ENCODE measurements at regions of chr9 and their contacts with region 1.

Region 1: GRCh38 chr9:5437254-5438216 is at the start of gene PLGRKT:
- DNase-seq: peak; percentile 83 to 84
- H3K4me3 ChIP-seq: peak within 1 kb of the TSS; percentile 80
- H3K27ac ChIP-seq: peak within 1 kb of the TSS; percentile 84
- H3K4me1 ChIP-seq: peaks cover 24% of the 10 kb centered on the region
- H3K27me3 ChIP-seq: no peaks in the 10 kb centered on the region
- CTCF ChIP-seq: no peak; the same call in 1 of the 2 replicates
- total RNA-seq, gene PLGRKT: 13.5 and 22.0 TPM in 2 replicates

Region 2: DNA sequence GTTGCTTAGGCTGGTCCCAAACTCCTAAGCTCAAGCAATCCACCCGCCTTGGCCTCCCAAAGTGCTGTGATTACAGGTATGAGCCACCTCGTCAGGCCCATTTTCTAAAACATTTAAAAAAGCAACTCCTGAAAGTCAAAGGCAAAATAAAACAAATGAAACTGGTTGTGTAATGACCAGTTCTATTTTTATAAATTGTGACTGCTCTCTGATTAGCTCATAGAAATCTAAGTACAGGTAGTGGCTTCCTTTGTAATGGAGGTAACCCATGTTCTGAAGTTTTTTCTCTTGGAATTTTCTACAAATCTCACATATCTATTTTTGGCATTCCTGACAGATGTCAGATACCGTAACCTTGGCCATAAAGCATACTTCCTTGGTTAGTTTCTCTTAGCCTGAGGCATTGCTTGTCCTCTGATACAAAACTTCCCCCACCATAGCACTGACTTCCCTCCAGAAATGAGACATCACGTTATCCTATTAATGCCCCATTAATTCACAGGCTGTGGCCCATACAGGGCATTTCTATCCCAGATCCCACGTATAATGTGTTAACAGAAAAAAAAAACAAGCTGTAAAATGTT is 682.4 kb before region 1 on chr9:
- CTCF ChIA-PET with region 1: no interaction called
- POLR2A ChIA-PET with region 1: no interaction called
- intact Hi-C with region 1: loop called (anchors 5 kb)
- DNase-seq: no peak
- H3K4me3 ChIP-seq: no peak overlapping the region
- H3K27ac ChIP-seq: no peak overlapping the region
- H3K4me1 ChIP-seq: no peaks in the 10 kb centered on the region
- H3K27me3 ChIP-seq: no peaks in the 10 kb centered on the region
- CTCF ChIP-seq: no peak

Region 3: GRCh38 chr9:5186416-5187169 is 250.9 kb before region 1 on chr9:
- CTCF ChIA-PET with region 1: interaction called, 9 read pairs
- POLR2A ChIA-PET with region 1: interaction called, 11 read pairs
- intact Hi-C with region 1: loop called (anchors 1 kb)
- DNase-seq: peak; percentile 44 to 46
- H3K4me3 ChIP-seq: no peak overlapping the region
- H3K27ac ChIP-seq: no peak overlapping the region
- H3K4me1 ChIP-seq: no peaks in the 10 kb centered on the region
- H3K27me3 ChIP-seq: no peaks in the 10 kb centered on the region
- CTCF ChIP-seq: peak; percentile 71

Region 4: DNA sequence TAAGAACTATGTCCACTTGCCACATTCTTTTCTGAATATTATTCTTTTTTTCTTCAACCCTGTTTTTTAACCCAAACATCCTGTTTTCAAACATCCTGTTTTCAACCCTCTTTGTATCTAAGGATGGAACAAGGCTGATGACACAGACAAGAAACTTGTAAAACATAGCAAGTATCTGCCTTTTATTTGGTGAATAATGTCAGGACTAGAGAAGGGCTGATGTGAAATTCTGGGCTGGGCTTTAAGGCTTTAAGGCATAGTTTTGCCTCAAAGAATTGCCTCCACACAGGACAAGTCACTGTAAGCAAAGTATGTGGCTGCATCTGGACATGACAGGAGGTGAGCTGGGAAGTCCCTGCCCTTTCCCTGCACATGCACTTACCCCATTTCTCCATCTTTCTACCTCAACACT is 148.9 kb after region 1 on chr9:
- CTCF ChIA-PET with region 1: no interaction called
- POLR2A ChIA-PET with region 1: no interaction called
- intact Hi-C with region 1: loop called (anchors 2 kb)
- DNase-seq: no peak
- H3K4me3 ChIP-seq: no peak overlapping the region
- H3K27ac ChIP-seq: no peak overlapping the region
- H3K4me1 ChIP-seq: peaks cover 14% of the 10 kb centered on the region
- H3K27me3 ChIP-seq: no peaks in the 10 kb centered on the region
- CTCF ChIP-seq: no peak